ENCODE measurements at regions of chr18 and their contacts with region 1.

Region 1: GRCh38 chr18:70431203-70431624 is 142.4 kb downstream of the SOCS6 start:
- DNase-seq: no peak
- ATAC-seq: no peak
- H3K4me3 Mint-ChIP-seq: no peak overlapping the region
- H3K27ac Mint-ChIP-seq: no peak overlapping the region
- H3K4me1 Mint-ChIP-seq: no peaks in the 10 kb centered on the region
- H3K27me3 Mint-ChIP-seq: no peaks in the 10 kb centered on the region

Region 2: GRCh38 chr18:68847219-68847837 is 1583.9 kb before region 1 on chr18:
- CTCF ChIA-PET with region 1: no interaction called
- POLR2A ChIA-PET with region 1: no interaction called
- intact Hi-C with region 1: loop called in 1 of 2 experiments (anchors 1 kb)
- DNase-seq: no peak
- ATAC-seq: no peak
- H3K4me3 Mint-ChIP-seq: no peak overlapping the region
- H3K27ac Mint-ChIP-seq: no peak overlapping the region
- H3K4me1 Mint-ChIP-seq: no peaks in the 10 kb centered on the region
- H3K27me3 Mint-ChIP-seq: no peaks in the 10 kb centered on the region

Region 3: GRCh38 chr18:70172225-70172624 is 259.0 kb before region 1 on chr18:
- CTCF ChIA-PET with region 1: interaction called, 3 read pairs
- POLR2A ChIA-PET with region 1: no interaction called
- intact Hi-C with region 1: loop called in 1 of 2 experiments (anchors 1 kb)
- DNase-seq: no peak
- ATAC-seq: no peak
- H3K4me3 Mint-ChIP-seq: no peak overlapping the region
- H3K27ac Mint-ChIP-seq: no peak overlapping the region
- H3K4me1 Mint-ChIP-seq: no peaks in the 10 kb centered on the region
- H3K27me3 Mint-ChIP-seq: no peaks in the 10 kb centered on the region

Region 4: DNA sequence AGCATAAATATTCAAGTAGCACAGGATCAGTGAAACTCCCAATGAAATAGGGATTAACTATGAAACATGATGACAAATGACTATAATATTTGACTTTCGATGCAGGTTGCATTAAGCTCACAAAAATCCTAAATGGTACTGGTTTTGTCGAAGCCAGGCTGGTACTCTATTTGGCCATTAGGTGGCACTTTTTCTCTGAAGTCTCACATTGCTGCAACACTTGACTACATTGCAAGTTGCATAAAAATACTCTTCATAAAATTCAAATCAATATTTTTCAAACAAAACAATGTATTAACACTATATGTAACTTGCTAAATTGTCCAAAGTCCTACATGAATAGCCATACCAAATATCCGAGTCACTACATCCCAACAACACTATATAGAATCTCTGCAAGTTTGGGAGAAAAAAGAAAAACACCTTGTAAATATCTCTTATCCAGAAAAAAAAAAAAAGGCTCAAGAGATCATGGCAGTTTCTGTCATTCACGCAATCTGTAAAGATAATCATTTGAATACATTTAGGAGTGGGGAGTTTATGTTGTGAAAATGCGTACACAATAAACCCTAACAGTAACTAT is 235.3 kb before region 1 on chr18:
- CTCF ChIA-PET with region 1: interaction called, 24 read pairs
- POLR2A ChIA-PET with region 1: no interaction called
- intact Hi-C with region 1: loop called (anchors 1 kb)
- DNase-seq: peak; percentile 35
- ATAC-seq: no peak
- H3K4me3 Mint-ChIP-seq: no peak overlapping the region
- H3K27ac Mint-ChIP-seq: no peak overlapping the region
- H3K4me1 Mint-ChIP-seq: peaks cover 37% of the 10 kb centered on the region
- H3K27me3 Mint-ChIP-seq: no peaks in the 10 kb centered on the region

Region 5: GRCh38 chr18:70288851-70289328 is 142.3 kb before region 1 on chr18 and contains the start of gene SOCS6:
- CTCF ChIA-PET with region 1: no interaction called
- POLR2A ChIA-PET with region 1: no interaction called
- intact Hi-C with region 1: loop called in 1 of 2 experiments (anchors 5 kb)
- DNase-seq: peak; percentile 71
- ATAC-seq: peak; percentile 63
- H3K4me3 Mint-ChIP-seq: peak within 1 kb of the TSS; percentile 82
- H3K27ac Mint-ChIP-seq: peak within 1 kb of the TSS; percentile 83
- H3K4me1 Mint-ChIP-seq: peaks cover 23% of the 10 kb centered on the region
- H3K27me3 Mint-ChIP-seq: peaks cover 19% of the 10 kb centered on the region
- total RNA-seq, gene SOCS6: 1.7 to 2.1 TPM